Activated CD4-positive, alpha-beta T cell treated with anti-CD3 and anti-CD28 coated beads, Interleukin-2, amount 10 ng/mL, durations not matched to agents 24 days and 14 days (primary cell): ENCODE measurements at regions of chr13 and their contacts with region 1.

Region 1: GRCh38 chr13:20945952-20946383 is 43.4 kb upstream of the XPO4 start:
- DNase-seq: no peak
- H3K4me3 Mint-ChIP-seq: peak overlapping the region; percentile 58
- H3K27ac Mint-ChIP-seq: peak overlapping the region; percentile 29
- H3K4me1 Mint-ChIP-seq: peaks cover 6% of the 10 kb centered on the region
- H3K27me3 Mint-ChIP-seq: peaks cover 42% of the 10 kb centered on the region

Region 2: DNA sequence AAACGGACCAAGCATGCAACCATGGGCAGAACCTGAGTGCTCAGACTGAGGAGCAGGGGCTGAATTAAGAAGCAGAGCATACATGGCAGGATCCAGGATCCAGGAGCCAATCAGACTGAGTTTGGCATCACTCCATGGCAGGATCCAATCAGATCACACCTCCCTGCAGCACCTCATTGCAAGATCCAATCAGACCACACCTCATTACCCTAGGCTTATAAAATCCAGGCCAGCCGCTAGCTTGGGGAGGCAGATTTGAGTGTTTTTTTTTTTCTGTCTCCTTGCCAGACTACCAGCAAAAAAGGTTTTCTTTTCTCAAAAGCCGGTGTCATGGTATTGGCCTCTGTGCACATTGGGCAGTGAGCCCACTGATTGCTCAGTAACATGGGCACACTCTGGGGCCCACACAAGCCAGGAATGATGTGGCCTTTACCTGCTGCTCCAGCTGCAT is 585.9 kb before region 1 on chr13:
- intact Hi-C with region 1: no loop called
- DNase-seq: no peak
- H3K4me3 Mint-ChIP-seq: no peak overlapping the region
- H3K27ac Mint-ChIP-seq: no peak overlapping the region
- H3K4me1 Mint-ChIP-seq: peaks cover 21% of the 10 kb centered on the region
- H3K27me3 Mint-ChIP-seq: peaks cover 1% of the 10 kb centered on the region

Region 3: DNA sequence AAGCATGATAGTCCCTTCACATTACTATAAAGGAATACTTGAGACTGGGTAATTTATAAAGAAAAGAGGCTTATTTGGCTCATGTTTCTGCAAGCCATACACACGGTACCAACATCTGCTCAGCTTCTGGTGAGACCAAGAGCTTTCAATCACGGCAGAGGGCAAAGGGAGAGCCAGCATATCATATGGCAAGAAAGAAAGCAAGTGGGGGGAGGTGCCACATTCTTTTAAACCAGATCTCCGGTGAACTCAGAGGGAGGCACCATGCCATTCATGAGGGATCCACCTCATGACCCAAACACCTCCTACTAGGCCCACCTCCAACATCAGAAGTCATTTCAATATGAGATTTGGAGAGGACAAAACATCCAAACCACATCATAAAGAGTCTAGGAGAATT is 63.8 kb before region 1 on chr13:
- intact Hi-C with region 1: no loop called
- DNase-seq: no peak
- H3K4me3 Mint-ChIP-seq: no peak overlapping the region
- H3K27ac Mint-ChIP-seq: no peak overlapping the region
- H3K4me1 Mint-ChIP-seq: peaks cover 14% of the 10 kb centered on the region
- H3K27me3 Mint-ChIP-seq: no peaks in the 10 kb centered on the region

Region 4: GRCh38 chr13:21060987-21061763 is 115.2 kb after region 1 on chr13 and contains the start of gene LATS2:
- intact Hi-C with region 1: loop called (anchors 10 kb)
- DNase-seq: peak; percentile 89
- H3K4me3 Mint-ChIP-seq: peak within 1 kb of the TSS; percentile 83
- H3K27ac Mint-ChIP-seq: peak within 1 kb of the TSS; percentile 26
- H3K4me1 Mint-ChIP-seq: peaks cover 5% of the 10 kb centered on the region
- H3K27me3 Mint-ChIP-seq: peaks cover 50% of the 10 kb centered on the region
- total RNA-seq, gene LATS2: 1.7 and 2.2 TPM in 2 replicates

Region 5: DNA sequence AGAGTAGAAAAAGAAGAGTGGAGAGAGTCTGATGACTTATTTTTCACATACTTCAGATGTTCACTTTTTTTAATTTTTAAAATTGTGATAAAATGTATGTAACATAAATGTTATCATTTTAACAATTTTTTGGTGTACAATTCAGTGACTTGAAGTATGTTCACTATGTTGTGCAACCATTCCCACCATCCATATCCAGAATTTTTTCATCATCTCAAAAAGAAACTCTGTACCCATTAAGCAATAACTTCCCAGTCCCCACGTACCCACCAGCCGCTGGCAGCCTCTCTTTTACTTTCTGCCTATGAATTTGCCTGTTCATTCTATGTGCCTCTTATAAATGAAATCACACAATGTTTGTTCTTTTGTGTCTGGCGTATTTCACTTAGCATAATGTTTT is 187.1 kb after region 1 on chr13:
- intact Hi-C with region 1: loop called (anchors 2 kb)
- DNase-seq: no peak
- H3K4me3 Mint-ChIP-seq: no peak overlapping the region
- H3K27ac Mint-ChIP-seq: no peak overlapping the region
- H3K4me1 Mint-ChIP-seq: no peaks in the 10 kb centered on the region
- H3K27me3 Mint-ChIP-seq: peaks cover 24% of the 10 kb centered on the region